T-cell (primary cell): ENCODE measurements at regions of chr6 and their contacts with region 1.

Region 1: GRCh38 chr6:166977621-166978525 is 21.3 kb upstream of the CEP43 start:
- DNase-seq: no peak
- ATAC-seq: no peak
- H3K4me3 ChIP-seq: no peak overlapping the region
- H3K4me3 Mint-ChIP-seq: no peak overlapping the region
- H3K27ac ChIP-seq: no peak overlapping the region
- H3K27ac Mint-ChIP-seq: no peak overlapping the region
- H3K4me1 ChIP-seq: peaks cover 0 to 8% of the 10 kb centered on the region in 2 experiments
- H3K4me1 Mint-ChIP-seq: peaks cover under 1 to 14% (median 11%) of the 10 kb centered on the region in 3 donors
- H3K27me3 ChIP-seq: no peaks in the 10 kb centered on the region
- H3K27me3 Mint-ChIP-seq: no peaks in the 10 kb centered on the region

Region 2: DNA sequence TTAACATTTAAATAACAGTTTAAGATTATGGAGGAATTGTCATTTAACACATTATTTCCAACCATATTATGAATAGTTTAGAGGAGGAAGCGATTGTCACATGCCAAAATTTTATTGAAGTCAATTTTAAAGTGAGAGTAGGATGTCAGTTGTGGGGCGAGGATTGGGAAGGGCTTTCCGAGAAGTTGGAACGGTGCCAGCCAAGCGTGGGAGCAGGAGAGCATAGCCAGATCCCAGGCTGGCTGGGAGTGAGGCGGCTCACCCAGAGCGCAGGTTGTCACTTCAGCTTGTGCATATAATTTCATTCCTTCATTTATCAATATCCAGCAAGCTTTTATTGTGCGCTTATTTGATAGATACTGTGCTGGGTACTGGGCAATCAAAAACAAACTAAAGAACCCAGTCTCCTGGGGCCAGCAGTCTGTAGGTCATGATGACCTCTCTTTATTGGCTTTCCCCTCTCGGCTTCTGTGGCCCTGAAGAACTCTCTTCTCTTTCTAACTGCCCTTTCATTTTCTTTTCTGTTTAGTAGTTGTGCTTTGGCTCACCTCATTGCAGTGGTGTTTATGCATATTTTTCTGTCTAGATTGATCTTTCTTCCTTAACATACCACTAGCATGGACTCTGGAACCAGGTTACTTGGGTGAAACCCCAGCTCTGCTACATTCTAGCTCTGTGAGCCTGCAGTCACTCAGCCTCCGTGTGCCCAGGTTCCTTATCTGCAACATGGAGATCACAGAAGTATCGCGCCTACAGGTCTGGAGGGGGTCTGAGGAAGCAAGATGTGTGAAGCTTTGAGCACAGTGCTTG is 27.7 kb after region 1 on chr6:
- CTCF ChIA-PET with region 1: interaction called in 1 of 2 experiments, 3 read pairs
- POLR2A ChIA-PET with region 1: interaction called in 1 of 2 experiments, 11 read pairs
- DNase-seq: no peak
- ATAC-seq: no peak
- H3K4me3 ChIP-seq: no peak overlapping the region
- H3K4me3 Mint-ChIP-seq: no peak overlapping the region
- H3K27ac ChIP-seq: no peak overlapping the region
- H3K27ac Mint-ChIP-seq: no peak overlapping the region
- H3K4me1 ChIP-seq: peaks cover 2 to 6% of the 10 kb centered on the region in 2 experiments
- H3K4me1 Mint-ChIP-seq: peaks cover 17 to 19% (median 18%) of the 10 kb centered on the region in 3 donors
- H3K27me3 ChIP-seq: no peaks in the 10 kb centered on the region
- H3K27me3 Mint-ChIP-seq: no peaks in the 10 kb centered on the region

Region 3: GRCh38 chr6:167163476-167164011 is 185.7 kb after region 1 on chr6:
- CTCF ChIA-PET with region 1: no interaction called
- POLR2A ChIA-PET with region 1: no interaction called
- DNase-seq: no peak
- ATAC-seq: no peak
- H3K4me3 ChIP-seq: no peak overlapping the region
- H3K4me3 Mint-ChIP-seq: no peak overlapping the region
- H3K27ac ChIP-seq: no peak overlapping the region
- H3K27ac Mint-ChIP-seq: no peak overlapping the region
- H3K4me1 ChIP-seq: no peaks in the 10 kb centered on the region
- H3K4me1 Mint-ChIP-seq: no peaks in the 10 kb centered on the region
- H3K27me3 ChIP-seq: peaks cover 0 to 2% of the 10 kb centered on the region in 2 experiments
- H3K27me3 Mint-ChIP-seq: peaks cover 5 to 8% of the 10 kb centered on the region in 2 donors

Region 4: DNA sequence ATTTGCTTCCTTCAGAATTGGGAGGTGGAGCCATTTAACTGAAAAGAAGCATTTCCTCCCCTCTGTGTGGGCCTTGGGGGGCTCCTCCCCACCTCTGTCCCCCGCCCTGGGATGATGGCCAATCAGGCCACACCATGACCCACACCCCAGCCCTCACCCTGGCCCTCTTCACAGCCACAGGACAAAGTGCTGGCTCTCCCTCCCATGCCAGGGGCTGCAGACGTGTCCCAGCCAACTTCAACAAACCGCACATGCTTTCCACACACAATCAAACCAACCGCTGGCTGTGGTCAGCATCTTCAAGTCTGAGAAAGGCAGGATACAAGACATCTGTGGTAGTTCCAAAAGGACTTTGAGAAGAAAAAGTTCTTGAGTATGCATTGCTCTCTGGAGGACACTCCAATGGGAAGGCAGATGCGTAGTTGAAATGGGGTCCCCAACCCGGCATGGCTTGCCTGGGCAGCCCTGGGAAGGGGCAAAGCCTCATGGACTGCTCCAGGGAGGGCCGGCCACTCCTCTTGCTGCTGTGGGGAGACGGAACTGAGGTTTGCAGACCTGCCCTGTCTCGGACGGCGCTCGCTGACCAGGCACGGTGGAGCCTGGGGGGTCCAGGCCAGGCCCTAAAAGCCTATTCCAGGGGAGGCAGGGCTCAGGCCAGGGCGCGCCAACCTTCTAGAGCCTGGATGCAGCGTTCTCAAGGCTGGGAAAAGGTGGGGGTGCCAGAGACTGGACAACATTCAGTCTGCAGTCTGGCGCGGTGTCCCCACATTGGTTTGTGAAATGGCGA is 359.2 kb after region 1 on chr6:
- CTCF ChIA-PET with region 1: no interaction called
- POLR2A ChIA-PET with region 1: no interaction called
- DNase-seq: no peak
- ATAC-seq: no peak
- H3K4me3 ChIP-seq: no peak overlapping the region
- H3K4me3 Mint-ChIP-seq: no peak overlapping the region
- H3K27ac ChIP-seq: no peak overlapping the region
- H3K27ac Mint-ChIP-seq: no peak overlapping the region
- H3K4me1 ChIP-seq: no peaks in the 10 kb centered on the region
- H3K4me1 Mint-ChIP-seq: no peaks in the 10 kb centered on the region
- H3K27me3 ChIP-seq: peaks cover 0 to 16% of the 10 kb centered on the region in 2 experiments
- H3K27me3 Mint-ChIP-seq: peaks cover 6 to 8% of the 10 kb centered on the region in 2 donors